MCF 10A (cell line): ENCODE measurements at regions of chr17 and their contacts with region 1.

Region 1: GRCh38 chr17:36591434-36592315 is at the start of gene DHRS11:
- DNase-seq: peak; percentile 81
- H3K4me3 Mint-ChIP-seq: peak within 1 kb of the TSS; percentile 72
- H3K27ac Mint-ChIP-seq: peak within 1 kb of the TSS; percentile 42
- H3K4me1 Mint-ChIP-seq: peaks cover 18% of the 10 kb centered on the region
- H3K27me3 Mint-ChIP-seq: no peaks in the 10 kb centered on the region
- CTCF ChIP-seq: no peak
- total RNA-seq, gene DHRS11: 11.8 and 14.7 TPM in 2 replicates

Region 2: DNA sequence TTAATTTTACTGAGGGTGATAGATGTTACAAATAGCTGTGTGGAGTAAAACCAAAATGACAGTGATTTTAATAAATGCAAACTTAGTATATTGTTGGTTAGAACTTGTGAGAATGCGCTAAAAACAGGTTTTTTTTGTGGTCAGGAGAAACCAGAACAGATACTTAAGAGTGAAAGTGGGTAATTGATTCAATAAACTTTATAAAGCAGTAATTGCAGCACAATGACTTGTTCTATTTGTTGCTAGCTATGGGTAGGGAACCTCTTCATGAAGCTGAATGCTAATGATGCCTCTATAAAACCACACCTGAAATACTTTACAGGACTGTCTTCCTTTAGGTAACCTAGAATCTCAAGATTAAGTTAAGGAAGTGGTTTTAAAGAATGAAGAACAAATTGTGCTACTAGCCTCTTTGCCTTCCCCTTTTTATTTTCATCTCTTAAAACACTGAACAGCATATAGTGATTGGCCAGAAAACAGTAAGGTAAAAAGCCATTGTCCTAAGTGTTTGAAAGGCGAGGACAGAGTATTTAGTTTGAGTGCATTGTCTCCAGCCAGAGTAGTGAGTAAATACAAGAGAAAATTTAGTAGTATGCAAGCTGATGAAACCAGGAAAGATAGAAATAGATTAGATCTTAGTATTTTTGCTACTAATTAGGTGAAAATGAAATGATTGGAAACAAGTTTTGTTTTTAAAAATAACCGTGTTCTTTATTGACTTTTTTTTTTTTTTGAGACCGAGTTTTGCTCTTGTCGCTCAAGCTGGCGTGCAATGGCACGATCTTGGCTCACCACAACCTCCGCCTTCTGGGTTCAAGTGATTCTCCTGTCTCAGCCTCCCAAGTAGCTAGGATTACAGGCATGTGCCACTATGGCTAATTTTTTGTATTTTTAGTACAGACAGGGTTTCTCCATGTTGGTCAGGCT is 40.9 kb before region 1 on chr17:
- CTCF ChIA-PET with region 1: no interaction called
- POLR2A ChIA-PET with region 1: interaction called, 25 read pairs
- intact Hi-C with region 1: loop called (anchors 2 kb)
- DNase-seq: no peak
- H3K4me3 Mint-ChIP-seq: no peak overlapping the region
- H3K27ac Mint-ChIP-seq: no peak overlapping the region
- H3K4me1 Mint-ChIP-seq: peaks cover 28% of the 10 kb centered on the region
- H3K27me3 Mint-ChIP-seq: no peaks in the 10 kb centered on the region
- CTCF ChIP-seq: no peak

Region 3: GRCh38 chr17:36705874-36706731 is 114.4 kb after region 1 on chr17:
- CTCF ChIA-PET with region 1: no interaction called
- POLR2A ChIA-PET with region 1: no interaction called
- intact Hi-C with region 1: no loop called
- DNase-seq: peak; percentile 58
- H3K4me3 Mint-ChIP-seq: no peak overlapping the region
- H3K27ac Mint-ChIP-seq: no peak overlapping the region
- H3K4me1 Mint-ChIP-seq: peaks cover 5% of the 10 kb centered on the region
- H3K27me3 Mint-ChIP-seq: peaks cover 50% of the 10 kb centered on the region
- CTCF ChIP-seq: peak; percentile 76